A673 (cell line): ENCODE measurements at regions of chr11 and their contacts with region 1.

Region 1: DNA sequence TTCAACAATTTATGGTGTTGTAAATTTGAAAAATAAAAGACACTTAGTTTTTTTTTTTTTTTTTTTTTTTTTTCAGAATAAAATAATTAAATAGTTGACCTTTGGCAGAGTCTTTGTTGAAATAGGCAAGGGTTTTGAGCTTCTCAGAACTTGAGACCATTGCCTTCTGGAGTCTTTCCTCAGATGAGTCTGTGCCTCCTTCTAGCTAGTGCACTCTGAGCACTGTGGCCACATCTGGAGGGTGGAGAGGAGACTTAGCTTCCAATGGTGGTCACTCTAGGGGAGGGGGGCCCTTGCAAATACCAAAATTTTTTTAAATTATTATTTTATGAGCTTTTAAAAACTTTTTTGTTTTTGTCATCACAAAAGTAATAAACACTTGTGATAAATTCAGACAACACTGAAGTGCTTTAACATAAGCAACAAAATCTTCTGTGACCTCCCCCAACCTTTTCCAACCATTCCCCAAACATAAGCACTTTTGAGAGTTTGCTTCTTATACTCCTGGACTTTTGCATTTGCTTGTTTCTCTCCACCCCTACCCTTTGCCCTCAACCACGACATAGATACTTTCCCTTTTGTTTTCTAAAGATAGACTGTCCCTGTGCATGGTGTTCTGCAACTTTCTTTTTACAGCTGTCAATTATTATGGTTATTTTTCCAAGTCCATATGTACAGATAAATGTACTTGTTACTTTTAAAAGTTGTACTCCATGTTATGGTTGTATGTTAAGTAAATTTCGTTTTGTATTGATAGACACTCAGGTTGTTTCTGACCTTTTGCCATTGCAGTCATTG is 41.1 kb downstream of the BMAL1 start:
- DNase-seq: no peak
- H3K4me3 ChIP-seq: no peak overlapping the region
- H3K27ac ChIP-seq: no peak overlapping the region
- H3K4me1 ChIP-seq: no peaks in the 10 kb centered on the region
- H3K27me3 ChIP-seq: no peaks in the 10 kb centered on the region
- CTCF ChIP-seq: no peak

Region 2: DNA sequence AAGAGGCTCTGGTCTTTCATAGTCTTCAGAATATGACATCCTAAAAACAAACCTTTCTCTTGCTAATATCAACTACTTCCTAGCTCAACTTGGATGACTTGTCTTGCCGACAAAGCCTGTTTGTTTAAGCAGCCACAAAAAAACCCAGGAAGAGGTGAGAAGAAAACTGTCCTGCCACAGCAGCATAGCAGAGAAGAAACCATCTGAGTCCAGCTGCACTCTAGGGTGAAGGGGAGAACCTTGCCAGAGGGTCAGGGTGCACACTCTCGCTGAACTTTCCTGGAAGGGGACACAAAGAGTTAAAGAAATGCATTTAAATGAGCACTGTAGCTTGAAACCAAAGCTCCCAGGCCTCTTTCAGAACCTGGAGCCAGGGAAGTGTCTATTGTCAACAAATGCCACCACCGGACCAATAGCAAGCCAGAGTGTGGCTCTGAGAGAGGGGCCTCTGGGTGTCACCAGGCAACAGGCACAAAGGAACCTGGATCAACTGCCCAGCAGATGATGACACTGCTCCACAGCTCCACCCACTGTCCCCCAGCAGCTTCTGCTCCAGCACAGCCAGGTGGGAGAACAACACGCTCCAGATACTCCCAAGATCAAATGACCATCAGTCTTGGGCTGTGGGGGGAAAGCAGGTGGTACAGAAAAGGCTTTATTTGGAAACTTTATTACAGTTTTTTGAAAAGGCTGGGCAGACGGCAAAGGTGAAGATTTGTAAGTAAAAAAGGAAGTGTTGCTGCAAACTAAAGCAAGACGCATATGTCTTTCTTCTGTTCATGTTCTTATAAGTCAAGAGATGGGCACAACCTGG is 203.9 kb before region 1 on chr11:
- CTCF ChIA-PET with region 1: no interaction called
- POLR2A ChIA-PET with region 1: interaction called, 11 read pairs
- intact Hi-C with region 1: no loop called
- DNase-seq: no peak
- H3K4me3 ChIP-seq: no peak overlapping the region
- H3K27ac ChIP-seq: no peak overlapping the region
- H3K4me1 ChIP-seq: no peaks in the 10 kb centered on the region
- H3K27me3 ChIP-seq: no peaks in the 10 kb centered on the region
- CTCF ChIP-seq: 0 out of 2 replicates have a peak, but pooled peaks have one; percentile 23

Region 3: GRCh38 chr11:13335319-13335718 is 16.6 kb after region 1 on chr11:
- CTCF ChIA-PET with region 1: interaction called, 11 read pairs
- POLR2A ChIA-PET with region 1: no interaction called
- intact Hi-C with region 1: no loop called
- DNase-seq: peak; percentile 75
- H3K4me3 ChIP-seq: no peak overlapping the region
- H3K27ac ChIP-seq: no peak overlapping the region
- H3K4me1 ChIP-seq: peaks cover 4% of the 10 kb centered on the region
- H3K27me3 ChIP-seq: no peaks in the 10 kb centered on the region
- CTCF ChIP-seq: peak; percentile 85